Transverse colon (tissue), 4 donors: ENCODE measurements at regions of chr1 and their contacts with region 1.

Region 1: DNA sequence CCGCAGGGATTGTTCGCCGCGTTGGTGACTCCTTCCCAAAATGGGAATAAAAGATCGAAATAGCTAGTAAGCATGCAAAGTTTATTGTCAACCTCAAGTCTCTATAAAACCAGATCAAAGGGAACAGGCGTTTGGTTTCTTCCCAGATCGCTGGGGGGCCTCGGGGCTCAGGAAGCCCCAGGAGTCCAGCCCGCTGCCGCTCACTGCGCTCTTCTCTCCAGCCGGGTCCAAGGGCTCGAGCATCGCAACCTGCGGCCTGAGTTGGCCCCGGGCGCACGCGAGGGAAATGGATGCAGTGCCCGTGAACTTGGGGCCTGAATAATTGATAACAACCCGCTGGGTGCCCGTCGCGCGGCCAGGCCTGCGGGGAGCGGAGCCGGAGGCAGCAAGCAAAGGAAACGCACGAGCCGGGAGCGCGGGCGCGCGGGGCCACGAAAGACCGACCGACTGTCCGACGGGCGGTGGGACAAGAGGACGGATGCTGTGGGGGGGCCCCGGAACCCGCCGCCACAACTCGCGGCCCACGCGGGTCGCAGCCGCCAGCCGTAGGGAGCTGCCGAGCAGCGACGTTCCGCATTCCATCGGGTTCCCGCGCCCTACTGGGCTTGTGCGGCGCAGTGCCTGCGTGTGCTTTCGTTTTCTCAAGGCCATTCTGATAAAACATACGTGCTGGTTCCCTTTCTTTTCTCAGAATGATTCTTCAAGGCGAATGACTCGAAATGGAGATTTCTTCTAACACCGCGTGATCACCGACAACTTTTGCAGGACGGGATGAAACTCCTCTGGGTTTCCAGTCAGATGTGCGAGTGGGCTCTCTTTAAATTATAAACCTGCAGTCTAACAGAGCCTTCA is 14.0 kb upstream of the ALX3 start:
- DNase-seq: peak; percentile 67
- H3K4me3 ChIP-seq: peak overlapping the region; percentile 57 to 79 (median 68)
- H3K27ac ChIP-seq: peak overlapping the region; percentile 66 to 85 (median 78)
- H3K4me1 ChIP-seq: peaks cover 6 to 19% (median 10%) of the 10 kb centered on the region in 4 donors
- H3K27me3 ChIP-seq: peaks cover 50% of the 10 kb centered on the region
- CTCF ChIP-seq: peak in 1 of 5 experiments; percentile 9
- EP300 ChIP-seq: no peak
- POLR2A ChIP-seq: no peak

Region 2: GRCh38 chr1:109757936-109758766 is 326.3 kb before region 1 on chr1:
- in situ Hi-C with region 1: no loop called
- intact Hi-C with region 1: no loop called
- DNase-seq: peak; percentile 6
- H3K4me3 ChIP-seq: no peak overlapping the region
- H3K27ac ChIP-seq: no peak overlapping the region
- H3K4me1 ChIP-seq: peaks cover 5 to 18% (median 13%) of the 10 kb centered on the region in 4 donors
- H3K27me3 ChIP-seq: no peaks in the 10 kb centered on the region
- CTCF ChIP-seq: no peak
- EP300 ChIP-seq: no peak
- POLR2A ChIP-seq: no peak

Region 3: DNA sequence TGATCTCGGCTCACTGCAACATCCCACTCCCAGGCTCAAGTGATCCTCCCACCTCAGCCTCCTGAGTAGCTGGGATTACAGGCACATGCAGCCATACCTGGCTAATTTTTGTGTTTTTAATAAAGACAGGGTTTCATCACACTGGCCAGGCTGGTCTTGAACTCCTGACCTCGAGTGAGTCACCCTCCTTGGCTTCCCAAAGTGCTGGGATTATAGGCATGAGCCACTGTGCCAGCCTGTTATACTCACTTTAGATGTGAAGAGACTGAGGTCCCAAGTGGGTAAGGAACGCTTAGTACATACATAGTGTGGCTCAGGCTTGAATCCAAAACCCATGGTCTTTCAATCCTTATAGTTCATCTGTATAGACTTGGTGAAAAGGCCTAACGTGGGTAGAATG is 257.0 kb before region 1 on chr1:
- in situ Hi-C with region 1: no loop called
- intact Hi-C with region 1: no loop called
- DNase-seq: no peak
- H3K4me3 ChIP-seq: no peak overlapping the region
- H3K27ac ChIP-seq: no peak overlapping the region
- H3K4me1 ChIP-seq: peaks cover 0 to 14% (median 5%) of the 10 kb centered on the region in 4 donors
- H3K27me3 ChIP-seq: no peaks in the 10 kb centered on the region
- CTCF ChIP-seq: no peak
- EP300 ChIP-seq: no peak
- POLR2A ChIP-seq: no peak

Region 4: DNA sequence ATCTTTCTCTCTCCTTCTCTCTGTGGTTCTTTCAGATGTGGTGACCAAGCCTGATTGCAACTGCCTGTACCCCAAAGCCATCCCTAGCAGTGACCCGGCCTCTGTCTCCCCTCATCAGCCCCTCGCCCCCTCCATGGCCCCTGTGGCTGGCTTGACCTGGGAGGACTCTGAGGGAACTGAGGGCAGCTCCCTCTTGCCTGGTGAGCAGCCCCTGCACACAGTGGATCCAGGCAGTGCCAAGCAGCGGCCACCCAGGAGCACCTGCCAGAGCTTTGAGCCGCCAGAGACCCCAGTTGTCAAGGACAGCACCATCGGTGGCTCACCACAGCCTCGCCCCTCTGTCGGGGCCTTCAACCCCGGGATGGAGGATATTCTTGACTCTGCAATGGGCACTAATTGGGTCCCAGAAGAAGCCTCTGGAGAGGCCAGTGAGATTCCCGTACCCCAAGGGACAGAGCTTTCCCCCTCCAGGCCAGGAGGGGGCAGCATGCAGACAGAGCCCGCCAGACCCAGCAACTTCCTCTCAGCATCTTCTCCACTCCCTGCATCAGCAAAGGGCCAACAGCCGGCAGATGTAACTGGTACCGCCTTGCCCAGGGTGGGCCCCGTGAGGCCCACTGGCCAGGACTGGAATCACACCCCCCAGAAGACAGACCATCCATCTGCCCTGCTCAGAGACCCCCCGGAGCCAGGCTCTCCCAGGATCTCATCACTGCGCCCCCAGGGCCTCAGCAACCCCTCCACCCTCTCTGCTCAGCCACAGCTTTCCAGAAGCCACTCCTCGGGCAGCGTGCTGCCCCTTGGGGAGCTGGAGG is 161.1 kb before region 1 on chr1:
- in situ Hi-C with region 1: no loop called
- intact Hi-C with region 1: loop called (anchors 5 kb)
- DNase-seq: peak; percentile 33
- H3K4me3 ChIP-seq: no peak overlapping the region
- H3K27ac ChIP-seq: peak overlapping the region in 3 of 4 donors; percentile 0 to 29 (median 28)
- H3K4me1 ChIP-seq: peaks cover 10 to 25% (median 14%) of the 10 kb centered on the region in 4 donors
- H3K27me3 ChIP-seq: no peaks in the 10 kb centered on the region
- CTCF ChIP-seq: peak; percentile 33 to 53 (median 48)
- EP300 ChIP-seq: no peak
- POLR2A ChIP-seq: no peak